H1 (cell line): ENCODE measurements at regions of chr1 and their contacts with region 1.

Region 1: DNA sequence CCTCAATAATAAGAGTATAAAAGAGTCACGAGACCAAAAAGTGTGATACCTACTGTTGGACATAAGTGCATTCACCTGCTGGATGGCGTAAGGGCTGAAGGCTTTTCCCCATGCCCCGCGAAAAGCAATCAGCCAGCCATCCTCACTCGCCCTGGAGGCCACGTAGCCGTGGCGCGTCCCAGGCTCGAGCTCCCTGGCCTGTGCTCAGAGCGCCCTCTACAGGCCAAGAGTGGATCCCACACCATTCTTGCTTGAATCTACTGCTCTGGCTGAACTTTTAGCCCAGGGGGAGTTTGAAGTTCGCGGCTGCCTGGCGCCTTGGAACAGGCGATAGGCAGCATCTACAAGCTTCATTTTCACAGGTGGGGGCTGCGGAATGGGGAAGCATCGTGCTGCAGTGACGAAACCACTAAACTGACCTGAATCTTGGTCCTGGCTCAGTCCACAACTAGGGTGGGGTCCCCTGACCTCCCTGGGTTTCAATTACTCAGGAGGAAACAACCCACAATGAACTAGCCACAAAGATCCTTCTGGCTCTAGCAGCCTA is 70.3 kb upstream of the SERBP1 start:
- DNase-seq: peak; percentile 75 to 94
- H3K4me3 ChIP-seq: peak overlapping the region in 3 of 4 experiments; percentile 4 to 32 (median 30); a peak in 4 of 8 replicates
- H3K27ac ChIP-seq: no peak overlapping the region
- H3K4me1 ChIP-seq: peaks cover 0 to 3% (median 1%) of the 10 kb centered on the region in 4 experiments; a peak in 2 of 7 replicates
- H3K27me3 ChIP-seq: peaks cover 0 to 8% (median 7%) of the 10 kb centered on the region in 4 experiments; a peak in 6 of 7 replicates
- CTCF ChIP-seq: peak; percentile 94 to 100 (median 98)
- EP300 ChIP-seq: no peak
- POLR2A ChIP-seq: no peak
- RAD21 ChIP-seq: peak; percentile 100

Region 2: GRCh38 chr1:67314696-67315095 is 185.8 kb before region 1 on chr1:
- CTCF ChIA-PET with region 1: interaction called, 11 read pairs
- POLR2A ChIA-PET with region 1: no interaction called
- DNase-seq: no peak
- H3K4me3 ChIP-seq: no peak overlapping the region
- H3K27ac ChIP-seq: no peak overlapping the region
- H3K4me1 ChIP-seq: peaks cover 0 to 3% (median 0%) of the 10 kb centered on the region in 4 experiments; a peak in 1 of 7 replicates
- H3K27me3 ChIP-seq: no peaks in the 10 kb centered on the region
- CTCF ChIP-seq: no peak
- EP300 ChIP-seq: no peak
- POLR2A ChIP-seq: no peak
- RAD21 ChIP-seq: no peak

Region 3: DNA sequence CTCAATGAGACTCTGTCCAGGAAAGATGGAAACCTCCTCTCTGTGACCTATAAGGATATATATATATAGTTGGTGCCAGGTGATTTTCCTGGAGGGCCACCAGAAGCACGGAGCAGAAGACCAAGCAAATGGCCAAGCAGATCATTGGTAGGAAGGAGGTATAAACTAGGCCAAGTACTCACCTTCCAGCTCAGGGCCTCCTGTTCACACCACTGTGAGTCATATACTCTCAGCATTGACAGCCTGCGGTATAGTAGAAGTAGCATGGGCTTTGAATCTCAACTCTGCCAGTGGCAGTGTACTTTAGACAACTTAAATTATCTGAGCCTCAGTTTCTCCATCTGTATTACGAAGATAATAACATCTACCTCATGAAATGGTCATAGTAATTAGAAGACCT is 177.4 kb before region 1 on chr1:
- CTCF ChIA-PET with region 1: interaction called, 10 read pairs
- POLR2A ChIA-PET with region 1: no interaction called
- DNase-seq: no peak
- H3K4me3 ChIP-seq: no peak overlapping the region
- H3K27ac ChIP-seq: no peak overlapping the region
- H3K4me1 ChIP-seq: peaks cover 0 to 3% (median 0%) of the 10 kb centered on the region in 4 experiments; a peak in 1 of 7 replicates
- H3K27me3 ChIP-seq: no peaks in the 10 kb centered on the region
- CTCF ChIP-seq: no peak
- EP300 ChIP-seq: no peak
- POLR2A ChIP-seq: no peak
- RAD21 ChIP-seq: no peak

Region 4: GRCh38 chr1:67418839-67419586 is 81.5 kb before region 1 on chr1:
- CTCF ChIA-PET with region 1: interaction called, 13 read pairs
- POLR2A ChIA-PET with region 1: interaction called, 4 read pairs
- DNase-seq: no peak
- H3K4me3 ChIP-seq: no peak overlapping the region
- H3K27ac ChIP-seq: no peak overlapping the region
- H3K4me1 ChIP-seq: no peaks in the 10 kb centered on the region
- H3K27me3 ChIP-seq: no peaks in the 10 kb centered on the region
- CTCF ChIP-seq: no peak
- EP300 ChIP-seq: no peak
- POLR2A ChIP-seq: no peak
- RAD21 ChIP-seq: no peak

Region 5: DNA sequence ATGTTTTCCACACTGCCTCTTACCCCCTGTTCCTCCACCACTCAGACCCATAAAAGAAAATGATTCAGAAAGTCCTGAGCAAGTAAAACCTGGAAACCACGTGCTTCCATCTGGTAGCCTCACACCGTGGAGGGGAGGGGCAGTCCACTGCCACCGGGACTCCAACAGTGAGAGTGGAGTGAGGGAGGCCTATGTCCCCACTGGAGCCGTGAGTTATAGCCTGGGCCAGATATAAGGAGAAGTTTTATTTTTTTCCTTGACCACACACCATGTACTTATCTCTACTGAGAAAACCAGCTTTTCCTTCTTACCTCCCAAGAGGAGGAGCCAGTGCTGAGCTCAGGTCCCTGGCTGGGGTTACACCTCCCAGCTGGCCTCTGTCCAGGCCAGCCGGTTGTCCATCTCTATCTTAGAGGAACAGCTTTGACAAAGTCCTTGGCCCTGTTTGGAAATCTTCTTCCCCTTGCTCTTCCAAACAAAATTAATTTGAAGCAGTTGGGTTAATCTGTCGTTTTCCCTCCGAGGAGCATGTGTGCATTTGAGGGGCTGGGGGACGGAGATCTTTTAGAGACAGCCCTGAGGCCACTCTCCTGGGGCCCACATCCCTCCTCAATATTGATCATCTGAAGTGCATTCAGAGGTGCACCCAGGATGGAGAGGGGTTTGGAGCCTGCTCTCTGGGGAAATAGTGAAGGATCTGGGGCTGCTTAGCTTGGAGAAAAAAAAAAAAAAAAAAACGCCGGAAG is 21.2 kb before region 1 on chr1:
- CTCF ChIA-PET with region 1: interaction called, 14 read pairs
- POLR2A ChIA-PET with region 1: no interaction called
- DNase-seq: no peak
- H3K4me3 ChIP-seq: no peak overlapping the region
- H3K27ac ChIP-seq: no peak overlapping the region
- H3K4me1 ChIP-seq: peaks cover 0 to 1% (median 0%) of the 10 kb centered on the region in 4 experiments; a peak in 1 of 7 replicates
- H3K27me3 ChIP-seq: no peaks in the 10 kb centered on the region
- CTCF ChIP-seq: no peak
- EP300 ChIP-seq: no peak
- POLR2A ChIP-seq: no peak
- RAD21 ChIP-seq: no peak

Region 6: DNA sequence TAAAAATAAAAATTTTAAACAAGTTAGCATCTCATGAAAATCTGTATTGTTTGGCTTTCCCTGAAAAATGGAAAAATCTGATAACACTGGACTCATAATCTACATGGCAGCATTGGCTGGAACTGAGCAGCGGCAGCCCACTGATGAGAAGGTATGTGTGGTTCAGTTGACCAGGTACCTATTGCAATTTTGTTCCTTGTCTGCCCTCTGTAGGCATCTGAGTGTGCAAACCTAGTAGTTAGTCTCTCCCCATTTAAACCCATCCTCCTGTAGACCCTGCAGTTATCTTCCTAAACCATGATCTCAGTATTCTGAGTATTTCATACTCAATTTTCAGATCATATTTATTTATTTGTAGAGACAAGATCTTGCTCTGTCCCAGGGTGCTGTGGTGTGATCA is 10.8 kb before region 1 on chr1:
- CTCF ChIA-PET with region 1: interaction called, 25 read pairs
- POLR2A ChIA-PET with region 1: interaction called, 3 read pairs
- DNase-seq: no peak
- H3K4me3 ChIP-seq: no peak overlapping the region
- H3K27ac ChIP-seq: no peak overlapping the region
- H3K4me1 ChIP-seq: peaks cover 0 to under 1% (median 0%) of the 10 kb centered on the region in 4 experiments; a peak in 2 of 7 replicates
- H3K27me3 ChIP-seq: no peaks in the 10 kb centered on the region
- CTCF ChIP-seq: peak in 2 of 3 experiments; percentile 60 to 64; a peak in 2 of 4 replicates
- EP300 ChIP-seq: no peak
- POLR2A ChIP-seq: no peak
- RAD21 ChIP-seq: peak; percentile 85 to 88

Region 7: DNA sequence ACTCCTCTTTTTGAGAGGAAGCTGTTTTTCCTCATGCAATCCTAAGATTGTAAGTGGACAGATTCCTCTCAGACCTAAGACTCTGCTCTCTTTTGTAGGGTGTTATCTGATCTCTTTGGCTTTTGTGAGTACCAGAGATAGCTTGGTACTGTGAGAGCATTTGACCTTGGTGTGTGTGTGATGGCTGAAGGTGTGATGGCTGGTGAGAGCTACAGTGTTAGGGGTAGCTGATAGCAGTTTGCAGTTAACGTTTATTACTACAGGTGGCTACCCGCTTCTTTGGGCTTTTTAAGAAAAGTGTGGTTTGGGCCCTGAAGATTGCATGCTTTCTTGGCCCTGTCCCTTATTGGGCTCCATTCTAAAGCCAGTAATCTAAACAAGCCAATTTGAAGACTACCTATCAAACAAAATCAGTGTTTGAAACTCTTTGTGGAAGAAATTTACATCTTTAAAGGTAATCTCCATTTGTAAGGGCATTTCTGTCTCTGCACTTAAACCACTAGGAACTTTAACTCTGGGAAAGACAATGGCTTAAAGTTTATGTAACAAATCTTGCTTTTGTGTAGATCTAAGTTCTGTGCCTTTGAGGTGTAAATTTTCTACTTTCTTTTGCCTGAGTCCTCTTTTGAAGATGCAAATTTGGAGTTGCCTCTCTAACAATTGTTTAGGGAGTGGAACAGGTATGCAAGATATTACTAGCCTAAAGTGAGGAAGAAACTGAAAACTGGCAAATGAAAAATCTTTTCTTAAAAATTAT is 15.0 kb after region 1 on chr1:
- CTCF ChIA-PET with region 1: interaction called, 12 read pairs
- POLR2A ChIA-PET with region 1: interaction called, 3 read pairs
- DNase-seq: peak in 1 of 2 experiments; percentile 33
- H3K4me3 ChIP-seq: no peak overlapping the region
- H3K27ac ChIP-seq: no peak overlapping the region
- H3K4me1 ChIP-seq: no peaks in the 10 kb centered on the region; a peak in 1 of 7 replicates
- H3K27me3 ChIP-seq: peaks cover 42 to 67% (median 63%) of the 10 kb centered on the region in 4 experiments
- CTCF ChIP-seq: no peak
- EP300 ChIP-seq: no peak
- POLR2A ChIP-seq: no peak
- RAD21 ChIP-seq: no peak

Region 8: GRCh38 chr1:67664048-67664447 is 163.6 kb after region 1 on chr1:
- CTCF ChIA-PET with region 1: no interaction called
- POLR2A ChIA-PET with region 1: no interaction called
- DNase-seq: no peak
- H3K4me3 ChIP-seq: no peak overlapping the region
- H3K27ac ChIP-seq: no peak overlapping the region
- H3K4me1 ChIP-seq: no peaks in the 10 kb centered on the region
- H3K27me3 ChIP-seq: no peaks in the 10 kb centered on the region
- CTCF ChIP-seq: no peak
- EP300 ChIP-seq: no peak
- POLR2A ChIP-seq: no peak
- RAD21 ChIP-seq: no peak